ENCODE measurements at regions of chr11 and their contacts with region 1.

Region 1: DNA sequence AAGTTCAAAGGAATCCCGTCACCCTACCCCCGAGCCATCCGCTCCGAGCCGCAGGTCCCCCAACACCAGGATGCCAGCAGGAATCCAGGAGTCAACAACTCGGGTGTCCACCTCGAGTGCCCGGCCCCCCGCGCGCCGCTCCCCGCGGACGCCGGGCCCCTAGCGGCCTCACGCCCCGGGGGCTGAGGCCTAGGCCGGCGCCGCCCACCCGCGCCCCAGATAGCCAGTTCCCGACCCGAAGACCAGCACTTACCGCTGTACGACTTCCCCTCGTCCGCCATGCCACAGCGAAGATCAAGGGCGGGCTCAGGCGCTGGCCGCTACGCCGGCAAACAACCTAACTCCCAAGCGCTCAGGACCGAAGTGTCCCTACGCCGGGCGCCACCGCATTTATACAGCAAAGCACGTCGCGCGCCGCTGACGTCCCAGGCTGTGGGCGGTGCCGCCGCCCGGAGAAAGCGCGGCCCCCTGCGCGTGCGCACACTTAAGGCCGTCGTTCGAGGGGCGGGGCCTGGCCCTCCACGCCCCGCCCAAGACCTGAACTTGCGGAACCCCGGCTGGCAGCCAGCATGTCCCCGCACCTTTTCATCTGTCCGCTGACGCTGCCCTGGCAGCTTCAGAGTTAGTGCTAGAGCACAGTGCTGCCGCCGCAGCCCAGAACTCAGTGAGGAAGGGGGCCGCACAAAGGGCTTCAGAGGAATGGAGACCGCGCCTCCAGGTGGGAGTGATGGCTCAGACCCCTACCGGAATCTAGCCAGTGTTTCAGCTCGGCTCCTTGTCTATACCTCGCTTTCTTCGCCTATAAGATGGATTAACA is at the start of gene NXF1:
- DNase-seq: peak; percentile 98
- ATAC-seq: peak; percentile 93
- total RNA-seq, gene NXF1: 42.7 TPM

Region 2: DNA sequence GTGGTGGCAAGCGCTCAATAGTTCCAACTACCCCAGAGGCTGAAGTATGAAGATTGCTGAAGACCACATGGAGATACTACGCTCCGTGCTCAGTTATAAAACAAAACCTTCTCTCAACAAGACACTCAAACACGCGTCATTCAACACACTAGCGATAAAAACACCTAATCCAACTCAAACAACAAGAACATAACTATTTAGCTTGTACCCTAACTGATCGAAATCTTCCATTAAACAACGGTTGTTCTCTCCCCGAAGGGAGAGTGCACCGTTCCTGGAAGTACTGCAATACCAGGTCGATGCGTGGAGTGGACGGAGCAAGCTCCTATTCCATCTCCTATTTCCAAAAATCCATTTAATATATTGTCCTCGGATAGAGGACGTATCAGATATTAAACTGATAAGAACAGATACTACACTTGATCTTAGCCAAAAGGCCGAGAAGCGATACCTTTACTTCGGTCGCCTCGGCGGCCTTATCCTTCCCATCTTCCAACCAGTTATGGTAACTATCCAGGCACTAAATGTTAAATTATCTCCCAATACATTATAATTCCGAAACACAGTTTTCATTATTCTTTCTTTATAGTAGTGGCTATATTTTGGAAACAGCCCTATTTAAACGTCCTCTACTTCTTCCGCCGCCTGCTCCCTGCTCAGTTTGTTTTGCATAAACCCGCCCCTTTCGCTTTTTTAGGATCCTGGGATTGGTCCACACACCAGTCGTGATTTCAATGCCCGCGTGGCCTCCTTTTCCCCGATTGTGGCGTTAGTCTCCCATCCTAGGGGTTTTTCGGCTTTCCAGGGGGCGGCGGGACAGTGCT is 36.3 kb after region 1 on chr11:
- intact Hi-C with region 1: loop called (anchors 2 kb)
- DNase-seq: peak; percentile 90
- ATAC-seq: peak; percentile 79

Measured in Right ventricle myocardium inferior (tissue), 1 donor.